Left colon (tissue), 2 donors: ENCODE measurements at regions of chr12 and their contacts with region 1.

Region 1: GRCh38 chr12:79747274-79747673 is 56.5 kb upstream of the PAWR start:
- DNase-seq: no peak
- ATAC-seq: no peak

Region 2: DNA sequence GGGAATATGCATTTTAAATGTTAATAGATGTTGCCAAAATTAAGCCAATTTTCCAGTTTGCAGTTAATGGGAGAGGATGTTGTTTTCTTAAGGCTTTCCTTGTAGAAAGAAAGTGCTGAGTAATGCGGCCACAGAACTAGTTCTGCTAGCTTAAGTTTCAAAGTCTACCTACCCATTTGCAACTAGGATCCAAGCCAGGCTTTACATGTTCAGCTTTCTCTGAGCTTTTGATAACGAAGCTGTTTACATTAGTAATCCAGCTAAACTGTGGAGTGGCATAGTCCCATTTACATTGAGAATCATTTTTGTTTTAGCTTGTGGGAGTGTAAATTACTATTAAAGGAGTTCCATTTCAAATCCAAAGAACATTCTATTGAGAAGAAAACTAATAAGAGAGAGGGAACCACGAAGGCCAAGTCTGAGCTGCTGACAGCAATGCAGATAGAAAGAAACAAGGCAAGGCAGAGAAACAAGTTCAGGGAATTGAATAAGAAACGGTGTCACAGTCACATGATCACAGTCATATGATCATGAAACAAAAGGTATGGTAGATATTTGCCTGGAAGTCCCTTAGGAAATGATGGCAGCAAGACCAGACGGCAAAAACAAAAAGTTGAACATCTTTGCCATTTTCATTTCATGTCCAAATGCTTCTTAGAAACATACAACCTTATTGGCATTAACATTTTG is 331.4 kb before region 1 on chr12:
- intact Hi-C with region 1: loop called in 1 of 2 experiments (anchors 10 kb)
- DNase-seq: peak in 1 of 2 donors; percentile 41
- ATAC-seq: peak; percentile 60